ENCODE measurements at regions of chr4 and their contacts with region 1.

Region 1: GRCh38 chr4:108030332-108030731 is 40.6 kb downstream of the HADH start:
- DNase-seq: peak; percentile 62 to 75 (median 70)
- H3K4me3 ChIP-seq: no peak overlapping the region
- H3K4me3 Mint-ChIP-seq: peak overlapping the region in 5 of 8 donors; percentile 50 to 76 (median 56)
- H3K27ac ChIP-seq: no peak overlapping the region
- H3K27ac Mint-ChIP-seq: peak overlapping the region; percentile 31 to 94 (median 84)
- H3K4me1 ChIP-seq: peaks cover 25% of the 10 kb centered on the region
- H3K4me1 Mint-ChIP-seq: peaks cover 21 to 40% (median 25%) of the 10 kb centered on the region in 4 donors
- H3K27me3 ChIP-seq: no peaks in the 10 kb centered on the region
- H3K27me3 Mint-ChIP-seq: no peaks in the 10 kb centered on the region

Region 2: DNA sequence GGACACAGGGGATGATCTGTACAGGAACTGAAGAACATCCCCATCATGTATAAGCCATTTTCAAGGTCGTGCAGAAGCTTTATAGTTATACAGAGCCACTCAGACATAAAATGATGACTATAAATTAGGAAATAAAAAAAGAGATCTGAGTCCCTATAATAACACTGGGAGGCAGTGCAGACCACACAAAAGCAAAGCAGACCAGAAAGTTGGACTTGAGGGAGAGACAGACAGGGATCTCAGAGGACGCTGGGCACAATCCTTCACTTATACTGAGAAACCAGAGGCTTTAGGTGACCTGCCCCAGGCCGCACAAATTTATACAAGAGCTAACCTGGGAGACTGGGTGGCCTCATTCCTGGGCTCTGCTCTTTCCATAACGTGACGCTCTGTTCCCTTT is 29.8 kb after region 1 on chr4:
- CTCF ChIA-PET with region 1: interaction called, 17 read pairs
- POLR2A ChIA-PET with region 1: no interaction called
- intact Hi-C with region 1: no loop called
- DNase-seq: no peak
- H3K4me3 ChIP-seq: no peak overlapping the region
- H3K4me3 Mint-ChIP-seq: no peak overlapping the region
- H3K27ac ChIP-seq: no peak overlapping the region
- H3K27ac Mint-ChIP-seq: peak overlapping the region in 4 of 7 donors; percentile 9 to 66 (median 34)
- H3K4me1 ChIP-seq: peaks cover 39% of the 10 kb centered on the region
- H3K4me1 Mint-ChIP-seq: peaks cover 24 to 56% (median 45%) of the 10 kb centered on the region in 4 donors
- H3K27me3 ChIP-seq: no peaks in the 10 kb centered on the region
- H3K27me3 Mint-ChIP-seq: no peaks in the 10 kb centered on the region

Region 3: DNA sequence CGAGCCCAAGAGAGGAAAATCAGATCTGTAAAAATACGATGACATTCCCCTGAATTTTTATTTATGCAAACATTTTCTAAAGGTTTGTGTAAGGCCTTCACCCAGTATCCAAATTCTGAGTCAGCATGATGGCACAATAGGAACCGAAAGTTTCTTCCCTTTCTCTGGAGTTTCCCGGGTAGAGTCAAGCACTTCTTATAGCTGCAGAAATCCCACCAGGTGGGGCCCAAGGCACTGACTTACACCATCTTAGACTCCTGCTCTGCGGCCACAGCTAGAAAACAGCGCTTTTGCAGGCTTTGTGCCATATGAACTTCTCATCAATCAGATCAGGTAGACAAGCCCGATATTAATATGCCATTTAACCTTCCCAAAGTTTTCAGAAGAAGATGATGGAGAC is 125.0 kb after region 1 on chr4:
- CTCF ChIA-PET with region 1: interaction called, 3 read pairs
- POLR2A ChIA-PET with region 1: interaction called, 3 read pairs
- intact Hi-C with region 1: loop called (anchors 1 kb)
- DNase-seq: peak in 1 of 5 donors; percentile 56
- H3K4me3 ChIP-seq: no peak overlapping the region
- H3K4me3 Mint-ChIP-seq: peak overlapping the region; percentile 26 to 84 (median 72)
- H3K27ac ChIP-seq: no peak overlapping the region
- H3K27ac Mint-ChIP-seq: peak overlapping the region; percentile 33 to 89 (median 52)
- H3K4me1 ChIP-seq: peaks cover 100% of the 10 kb centered on the region
- H3K4me1 Mint-ChIP-seq: peaks cover 54 to 80% (median 69%) of the 10 kb centered on the region in 4 donors
- H3K27me3 ChIP-seq: no peaks in the 10 kb centered on the region
- H3K27me3 Mint-ChIP-seq: no peaks in the 10 kb centered on the region

Region 4: GRCh38 chr4:108181704-108182103 is 151.4 kb after region 1 on chr4:
- CTCF ChIA-PET with region 1: interaction called, 29 read pairs
- POLR2A ChIA-PET with region 1: no interaction called
- intact Hi-C with region 1: loop called (anchors 1 kb)
- DNase-seq: no peak
- H3K4me3 ChIP-seq: no peak overlapping the region
- H3K4me3 Mint-ChIP-seq: no peak overlapping the region
- H3K27ac ChIP-seq: no peak overlapping the region
- H3K27ac Mint-ChIP-seq: no peak overlapping the region
- H3K4me1 ChIP-seq: no peaks in the 10 kb centered on the region
- H3K4me1 Mint-ChIP-seq: peaks cover 0 to 2% (median 0%) of the 10 kb centered on the region in 4 donors
- H3K27me3 ChIP-seq: no peaks in the 10 kb centered on the region
- H3K27me3 Mint-ChIP-seq: peaks cover 3 to 4% of the 10 kb centered on the region in 2 donors

Region 5: GRCh38 chr4:108473221-108473620 is 442.9 kb after region 1 on chr4:
- CTCF ChIA-PET with region 1: interaction called, 4 read pairs
- POLR2A ChIA-PET with region 1: no interaction called
- intact Hi-C with region 1: loop called (anchors 1 kb)
- DNase-seq: peak in 1 of 5 donors; percentile 8
- H3K4me3 ChIP-seq: no peak overlapping the region
- H3K4me3 Mint-ChIP-seq: no peak overlapping the region
- H3K27ac ChIP-seq: no peak overlapping the region
- H3K27ac Mint-ChIP-seq: peak overlapping the region in 1 of 7 donors; percentile 5
- H3K4me1 ChIP-seq: peaks cover 2% of the 10 kb centered on the region
- H3K4me1 Mint-ChIP-seq: peaks cover under 1 to 6% (median 4%) of the 10 kb centered on the region in 4 donors
- H3K27me3 ChIP-seq: no peaks in the 10 kb centered on the region
- H3K27me3 Mint-ChIP-seq: no peaks in the 10 kb centered on the region

Region 6: GRCh38 chr4:108492816-108493595 is 462.7 kb after region 1 on chr4:
- CTCF ChIA-PET with region 1: interaction called, 32 read pairs
- POLR2A ChIA-PET with region 1: interaction called, 4 read pairs
- intact Hi-C with region 1: loop called (anchors 1 kb)
- DNase-seq: peak in 3 of 5 donors; percentile 8 to 29 (median 20)
- H3K4me3 ChIP-seq: peak overlapping the region in 1 of 2 donors; percentile 6
- H3K4me3 Mint-ChIP-seq: peak overlapping the region in 1 of 8 donors; percentile 13
- H3K27ac ChIP-seq: no peak overlapping the region
- H3K27ac Mint-ChIP-seq: no peak overlapping the region
- H3K4me1 ChIP-seq: no peaks in the 10 kb centered on the region
- H3K4me1 Mint-ChIP-seq: peaks cover 0 to 4% (median under 1%) of the 10 kb centered on the region in 4 donors
- H3K27me3 ChIP-seq: no peaks in the 10 kb centered on the region
- H3K27me3 Mint-ChIP-seq: no peaks in the 10 kb centered on the region

Region 7: GRCh38 chr4:108512615-108513505 is 482.5 kb after region 1 on chr4:
- CTCF ChIA-PET with region 1: interaction called, 10 read pairs
- POLR2A ChIA-PET with region 1: interaction called, 3 read pairs
- intact Hi-C with region 1: loop called (anchors 1 kb)
- DNase-seq: peak in 4 of 5 donors; percentile 10 to 38 (median 24)
- H3K4me3 ChIP-seq: no peak overlapping the region
- H3K4me3 Mint-ChIP-seq: peak overlapping the region in 7 of 8 donors; percentile 1 to 82 (median 71)
- H3K27ac ChIP-seq: no peak overlapping the region
- H3K27ac Mint-ChIP-seq: peak overlapping the region in 1 of 7 donors; percentile 5
- H3K4me1 ChIP-seq: no peaks in the 10 kb centered on the region
- H3K4me1 Mint-ChIP-seq: peaks cover 7 to 16% (median 9%) of the 10 kb centered on the region in 4 donors
- H3K27me3 ChIP-seq: no peaks in the 10 kb centered on the region
- H3K27me3 Mint-ChIP-seq: peaks cover 0 to 4% of the 10 kb centered on the region in 2 donors